Left cardiac atrium (tissue), 4 donors: ENCODE measurements at regions of chr11 and their contacts with region 1.

Region 1: DNA sequence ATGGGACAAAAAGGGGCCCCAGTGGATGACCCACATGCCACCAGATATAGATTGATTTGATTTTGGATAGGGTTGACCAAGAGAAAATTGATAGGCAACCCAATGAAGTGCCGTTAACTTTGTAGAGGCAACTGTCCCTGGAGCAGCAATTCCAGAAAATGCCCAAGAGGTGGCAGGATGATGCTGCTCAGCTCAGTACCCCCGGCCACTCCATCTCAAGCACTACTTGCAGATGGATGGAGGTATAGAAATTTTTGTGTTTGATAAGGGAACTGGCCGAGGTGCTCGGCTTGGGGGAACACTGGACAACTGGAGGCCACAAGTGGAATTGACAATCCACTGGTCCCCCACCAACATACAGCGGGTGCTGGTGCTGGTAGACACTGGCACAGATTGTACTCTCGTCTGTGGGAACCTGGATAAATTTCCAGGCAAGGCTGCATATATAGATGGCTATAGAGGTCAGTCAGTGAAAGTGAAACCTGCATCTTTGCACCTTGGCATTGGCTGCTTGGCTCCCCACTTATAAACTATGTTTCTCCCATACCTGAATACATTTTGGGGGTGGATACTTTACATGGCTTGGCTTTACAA is 86.3 kb downstream of the CCDC83 start:
- DNase-seq: peak; percentile 57
- ATAC-seq: peak; percentile 78 to 79

Region 2: DNA sequence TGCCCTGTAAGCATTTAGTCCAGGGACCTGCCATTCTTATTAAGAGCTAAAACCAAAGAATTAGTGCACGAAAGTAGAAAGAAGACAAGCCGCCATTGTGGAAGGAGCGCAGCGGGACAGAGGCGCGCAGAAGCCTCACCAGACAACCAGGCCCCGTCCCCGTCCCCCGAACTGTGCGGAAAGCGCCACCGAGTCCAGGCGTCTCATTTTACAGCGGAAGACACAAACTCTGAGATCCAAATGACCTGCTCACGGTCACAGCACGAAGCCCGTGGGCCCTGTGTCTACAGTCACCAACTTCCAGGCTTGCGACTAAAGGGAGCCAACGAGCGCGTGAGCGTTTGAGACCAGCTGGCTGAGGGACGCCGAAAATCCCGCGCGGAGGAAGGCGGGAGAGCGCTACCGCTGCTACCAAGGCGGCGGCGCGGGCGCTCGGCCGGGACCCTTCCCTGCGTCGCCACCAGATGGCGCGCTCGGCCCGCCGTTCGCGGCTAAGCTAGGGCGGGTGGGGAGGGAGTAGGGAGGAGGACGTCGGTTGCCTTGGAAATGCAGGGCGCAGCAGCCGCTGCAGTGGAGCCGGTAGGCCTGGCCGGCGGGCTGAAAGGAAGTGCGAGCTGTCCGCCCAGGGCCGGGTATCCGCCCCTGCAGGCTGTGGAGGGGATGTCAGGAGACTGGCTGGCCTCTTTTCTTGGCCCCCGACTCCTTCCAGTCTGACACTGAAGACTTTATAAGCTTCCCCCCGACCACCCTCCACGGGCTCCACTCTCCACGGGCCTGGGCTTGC is 86.7 kb before region 1 on chr11:
- intact Hi-C with region 1: loop called in 1 of 2 experiments (anchors 10 kb)
- DNase-seq: peak; percentile 94
- ATAC-seq: peak; percentile 98 to 99

Region 3: DNA sequence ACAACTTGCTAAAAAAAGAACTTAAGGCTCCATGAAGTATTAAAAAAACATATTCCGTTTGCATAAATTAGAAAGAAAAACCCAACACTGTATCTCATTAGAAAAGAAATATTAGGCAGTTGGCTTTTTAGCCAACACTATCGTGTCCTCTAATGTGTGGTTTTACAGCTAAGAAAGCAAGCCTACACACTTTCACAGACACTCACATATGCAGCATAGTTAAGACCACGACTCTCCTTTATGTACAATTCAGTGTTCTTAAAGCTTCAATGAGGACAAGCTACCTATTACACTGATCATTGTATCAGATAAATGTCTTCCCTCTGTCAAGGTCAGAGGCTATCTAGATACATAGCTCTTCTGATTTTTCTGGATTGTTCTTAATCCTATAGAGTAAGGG is 47.3 kb after region 1 on chr11:
- intact Hi-C with region 1: no loop called
- DNase-seq: no peak
- ATAC-seq: no peak

Region 4: GRCh38 chr11:86202013-86202336 is 260.5 kb after region 1 on chr11:
- intact Hi-C with region 1: loop called in 1 of 2 experiments (anchors 10 kb)
- DNase-seq: no peak
- ATAC-seq: peak in 1 of 2 donors; percentile 49

Region 5: DNA sequence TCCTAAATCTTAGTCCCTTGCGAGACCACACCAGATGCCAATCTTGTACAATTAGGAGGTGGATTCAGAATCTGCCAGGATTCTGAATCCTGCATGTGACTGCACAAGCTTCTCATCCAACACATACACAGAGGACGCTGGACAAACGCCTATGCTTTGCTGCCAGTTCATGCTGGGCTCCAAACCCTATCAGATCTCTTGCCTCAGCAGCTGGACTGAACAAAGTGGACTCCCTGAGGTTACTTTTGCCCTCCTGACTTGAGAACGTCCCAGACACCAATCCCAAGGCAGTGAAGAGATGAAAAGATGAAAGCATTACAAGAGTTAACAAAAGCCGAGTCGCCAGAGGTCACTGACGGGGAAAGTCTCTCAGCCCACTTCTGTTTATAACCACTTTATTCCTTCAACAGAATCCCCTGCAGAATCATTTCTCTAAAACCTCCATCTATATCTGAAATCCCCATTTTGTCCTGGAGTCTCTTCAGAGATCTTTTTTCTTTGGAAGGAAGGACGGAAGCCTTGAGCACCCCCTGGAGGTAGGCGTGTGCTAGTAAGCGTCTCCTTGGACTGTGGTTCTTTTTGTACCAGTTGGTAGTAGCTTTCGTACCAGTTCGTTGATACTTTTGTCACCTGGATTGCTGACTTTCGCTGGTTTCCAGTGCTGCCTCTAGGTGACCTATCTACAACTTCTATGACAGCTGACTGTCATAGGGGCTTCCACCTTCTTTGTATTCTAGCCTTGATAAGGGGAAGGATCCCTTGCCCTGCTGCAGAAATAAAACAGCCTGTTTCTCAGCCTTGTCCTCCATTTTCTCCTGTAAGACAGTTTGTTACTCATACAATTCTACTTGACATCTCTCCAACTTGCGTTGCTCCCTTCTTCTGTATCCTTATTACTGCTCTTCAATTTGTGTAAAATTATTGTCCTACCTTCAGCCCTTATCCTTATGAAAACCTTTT is 276.9 kb after region 1 on chr11:
- intact Hi-C with region 1: loop called in 1 of 2 experiments (anchors 2 kb)
- DNase-seq: peak; percentile 64
- ATAC-seq: peak; percentile 80 to 92

Region 6: GRCh38 chr11:86291466-86292262 is 350.2 kb after region 1 on chr11:
- intact Hi-C with region 1: loop called in 1 of 2 experiments (anchors 5 kb)
- DNase-seq: peak; percentile 37
- ATAC-seq: peak in 1 of 2 donors; percentile 17